ENCODE measurements at regions of chr13 and their contacts with region 1.

Region 1: GRCh38 chr13:20940083-20940880 is 37.7 kb upstream of the XPO4 start:
- DNase-seq: peak; percentile 83
- ATAC-seq: peak; percentile 59
- H3K4me3 ChIP-seq: no peak overlapping the region
- H3K27ac ChIP-seq: no peak overlapping the region
- H3K4me1 ChIP-seq: peaks cover 41% of the 10 kb centered on the region
- H3K27me3 ChIP-seq: peaks cover 0 to 17% of the 10 kb centered on the region in 2 experiments; a peak in 2 of 5 replicates
- CTCF ChIP-seq: no peak
- EP300 ChIP-seq: peak in 1 of 2 experiments; percentile 49; a peak in 2 of 4 replicates
- POLR2A ChIP-seq: no peak
- RAD21 ChIP-seq: no peak

Region 2: GRCh38 chr13:20960663-20961309 is 20.5 kb after region 1 on chr13:
- CTCF ChIA-PET with region 1: no interaction called
- POLR2A ChIA-PET with region 1: no interaction called
- in situ Hi-C with region 1: no loop called
- intact Hi-C with region 1: no loop called
- DNase-seq: peak; percentile 78
- ATAC-seq: peak; percentile 98
- H3K4me3 ChIP-seq: peak overlapping the region; percentile 36 to 42 (median 42)
- H3K27ac ChIP-seq: peak overlapping the region; percentile 8
- H3K4me1 ChIP-seq: peaks cover 28% of the 10 kb centered on the region
- H3K27me3 ChIP-seq: no peaks in the 10 kb centered on the region
- CTCF ChIP-seq: no peak
- EP300 ChIP-seq: no peak
- POLR2A ChIP-seq: no peak
- RAD21 ChIP-seq: no peak

Region 3: GRCh38 chr13:21022056-21022979 is 82.0 kb after region 1 on chr13:
- CTCF ChIA-PET with region 1: no interaction called
- POLR2A ChIA-PET with region 1: no interaction called
- in situ Hi-C with region 1: no loop called
- intact Hi-C with region 1: loop called (anchors 5 kb)
- DNase-seq: peak; percentile 80
- ATAC-seq: peak; percentile 79
- H3K4me3 ChIP-seq: peak overlapping the region in 1 of 3 experiments; percentile 30; a peak in 2 of 6 replicates
- H3K27ac ChIP-seq: peak overlapping the region; percentile 41
- H3K4me1 ChIP-seq: peaks cover 43% of the 10 kb centered on the region
- H3K27me3 ChIP-seq: no peaks in the 10 kb centered on the region
- CTCF ChIP-seq: no peak
- EP300 ChIP-seq: peak in 1 of 2 experiments; percentile 47; a peak in 1 of 4 replicates
- POLR2A ChIP-seq: no peak
- RAD21 ChIP-seq: no peak

Region 4: GRCh38 chr13:21060987-21061763 is 120.9 kb after region 1 on chr13 and contains the start of gene LATS2:
- CTCF ChIA-PET with region 1: no interaction called
- POLR2A ChIA-PET with region 1: interaction called, 3 read pairs
- in situ Hi-C with region 1: no loop called
- intact Hi-C with region 1: loop called (anchors 1 kb)
- DNase-seq: peak; percentile 87
- ATAC-seq: peak; percentile 91
- H3K4me3 ChIP-seq: peak within 1 kb of the TSS; percentile 90 to 94 (median 91)
- H3K27ac ChIP-seq: peak within 1 kb of the TSS; percentile 97
- H3K4me1 ChIP-seq: peaks cover 53% of the 10 kb centered on the region
- H3K27me3 ChIP-seq: no peaks in the 10 kb centered on the region; a peak in 2 of 5 replicates
- CTCF ChIP-seq: peak; percentile 57
- EP300 ChIP-seq: peak in 1 of 2 experiments; percentile 48; a peak in 2 of 4 replicates
- POLR2A ChIP-seq: peak; percentile 85 to 86
- RAD21 ChIP-seq: peak; percentile 73
- total RNA-seq, gene LATS2: 7.1 and 7.3 TPM in 2 replicates

Region 5: DNA sequence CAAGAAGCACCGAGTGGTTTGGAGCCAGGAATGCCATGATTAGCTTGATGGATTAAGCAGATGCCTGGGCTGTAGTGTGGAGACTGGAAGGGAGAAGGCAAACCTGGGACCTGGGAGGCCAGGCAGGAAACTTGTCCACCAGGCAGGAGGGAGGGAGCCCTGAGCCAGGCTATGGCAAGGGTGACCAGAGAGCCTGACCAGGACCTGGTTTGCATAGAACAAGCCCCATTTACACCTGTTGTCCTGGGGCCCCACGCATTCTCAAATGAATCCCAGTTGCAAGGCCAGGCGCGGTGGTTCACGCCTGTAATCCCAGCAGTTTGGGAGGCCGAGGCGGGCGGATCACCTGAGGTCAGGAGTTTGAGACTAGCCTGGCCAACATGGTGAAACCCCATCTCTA is 171.3 kb after region 1 on chr13:
- CTCF ChIA-PET with region 1: interaction called, 3 read pairs
- POLR2A ChIA-PET with region 1: no interaction called
- in situ Hi-C with region 1: no loop called
- intact Hi-C with region 1: loop called (anchors 2 kb)
- DNase-seq: no peak
- ATAC-seq: no peak
- H3K4me3 ChIP-seq: no peak overlapping the region
- H3K27ac ChIP-seq: no peak overlapping the region
- H3K4me1 ChIP-seq: peaks cover 55% of the 10 kb centered on the region
- H3K27me3 ChIP-seq: no peaks in the 10 kb centered on the region
- CTCF ChIP-seq: no peak
- EP300 ChIP-seq: no peak
- POLR2A ChIP-seq: no peak
- RAD21 ChIP-seq: no peak

Region 6: GRCh38 chr13:21176220-21176982 is 236.1 kb after region 1 on chr13 and contains the starts of genes MRPL57 and SKA3:
- CTCF ChIA-PET with region 1: interaction called, 8 read pairs
- POLR2A ChIA-PET with region 1: interaction called, 7 read pairs
- in situ Hi-C with region 1: loop called (anchors 10 kb)
- intact Hi-C with region 1: loop called (anchors 1 kb)
- DNase-seq: peak; percentile 89
- ATAC-seq: peak; percentile 94
- H3K4me3 ChIP-seq: peak within 1 kb of the TSS; percentile 77 to 99 (median 95)
- H3K27ac ChIP-seq: peak within 1 kb of the TSS; percentile 92
- H3K4me1 ChIP-seq: peaks cover 57% of the 10 kb centered on the region
- H3K27me3 ChIP-seq: no peaks in the 10 kb centered on the region; a peak in 3 of 5 replicates
- CTCF ChIP-seq: peak; percentile 5; the same call in 1 of the 2 replicates
- EP300 ChIP-seq: no peak
- POLR2A ChIP-seq: peak; percentile 98 to 99
- RAD21 ChIP-seq: peak; percentile 47
- total RNA-seq, gene MRPL57: 35.2 and 36.7 TPM in 2 replicates
- total RNA-seq, gene SKA3: 10.8 and 15.2 TPM in 2 replicates

Region 7: DNA sequence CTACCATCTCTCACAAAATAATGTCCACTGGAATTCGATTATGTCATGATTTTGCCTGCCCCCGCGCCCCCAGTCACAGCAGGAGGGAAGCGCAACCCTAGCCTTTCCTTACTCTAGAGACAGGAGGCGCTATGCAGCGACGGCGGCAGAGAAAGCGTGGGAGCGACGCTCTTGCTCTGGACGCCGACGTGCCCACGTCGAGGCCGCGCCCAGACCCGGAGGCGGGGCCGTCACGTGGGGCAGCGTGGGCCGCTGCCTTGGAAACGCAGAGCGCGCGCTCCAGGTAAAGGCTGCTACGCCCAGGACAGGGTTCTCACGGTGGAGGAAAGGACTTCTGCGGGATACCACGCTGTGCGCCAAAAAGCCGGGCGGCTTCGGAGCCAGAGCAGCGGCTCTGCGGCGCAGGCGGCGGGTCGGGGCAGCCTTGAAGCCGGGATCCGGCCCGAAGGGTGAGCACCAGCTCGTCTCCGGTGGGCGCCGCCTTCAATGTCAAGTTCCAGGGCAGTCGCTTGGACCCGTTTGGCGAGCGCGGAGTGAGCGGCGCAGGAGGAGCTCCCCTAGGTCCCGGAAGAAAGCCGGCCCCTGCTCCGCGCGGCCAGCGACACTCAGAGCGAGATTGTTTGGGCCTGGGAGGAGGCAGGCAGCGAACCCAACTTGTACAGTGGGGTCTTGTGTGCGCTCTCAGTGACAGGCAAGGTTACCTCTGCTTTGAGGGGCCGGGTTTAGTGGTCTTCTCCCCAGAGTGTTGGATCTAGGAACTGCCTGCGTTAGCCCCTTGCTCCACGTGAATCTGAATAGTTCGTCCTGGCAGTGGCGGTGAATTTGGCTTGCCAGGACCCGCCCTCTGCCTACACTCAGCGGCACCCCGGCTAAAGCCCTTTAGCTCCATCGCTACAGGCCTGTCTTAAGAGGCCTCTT is 357.9 kb after region 1 on chr13:
- CTCF ChIA-PET with region 1: no interaction called
- POLR2A ChIA-PET with region 1: no interaction called
- in situ Hi-C with region 1: no loop called
- intact Hi-C with region 1: loop called (anchors 5 kb)
- DNase-seq: peak; percentile 83
- ATAC-seq: peak; percentile 97
- H3K4me3 ChIP-seq: peak overlapping the region; percentile 76 to 85 (median 83)
- H3K27ac ChIP-seq: peak overlapping the region; percentile 41
- H3K4me1 ChIP-seq: peaks cover 12% of the 10 kb centered on the region
- H3K27me3 ChIP-seq: no peaks in the 10 kb centered on the region
- CTCF ChIP-seq: peak; percentile 97
- EP300 ChIP-seq: peak in 1 of 2 experiments; percentile 52; a peak in 2 of 4 replicates
- POLR2A ChIP-seq: no peak
- RAD21 ChIP-seq: peak; percentile 55